A549 (cell line): ENCODE measurements at regions of chr3 and their contacts with region 1.

Region 1: DNA sequence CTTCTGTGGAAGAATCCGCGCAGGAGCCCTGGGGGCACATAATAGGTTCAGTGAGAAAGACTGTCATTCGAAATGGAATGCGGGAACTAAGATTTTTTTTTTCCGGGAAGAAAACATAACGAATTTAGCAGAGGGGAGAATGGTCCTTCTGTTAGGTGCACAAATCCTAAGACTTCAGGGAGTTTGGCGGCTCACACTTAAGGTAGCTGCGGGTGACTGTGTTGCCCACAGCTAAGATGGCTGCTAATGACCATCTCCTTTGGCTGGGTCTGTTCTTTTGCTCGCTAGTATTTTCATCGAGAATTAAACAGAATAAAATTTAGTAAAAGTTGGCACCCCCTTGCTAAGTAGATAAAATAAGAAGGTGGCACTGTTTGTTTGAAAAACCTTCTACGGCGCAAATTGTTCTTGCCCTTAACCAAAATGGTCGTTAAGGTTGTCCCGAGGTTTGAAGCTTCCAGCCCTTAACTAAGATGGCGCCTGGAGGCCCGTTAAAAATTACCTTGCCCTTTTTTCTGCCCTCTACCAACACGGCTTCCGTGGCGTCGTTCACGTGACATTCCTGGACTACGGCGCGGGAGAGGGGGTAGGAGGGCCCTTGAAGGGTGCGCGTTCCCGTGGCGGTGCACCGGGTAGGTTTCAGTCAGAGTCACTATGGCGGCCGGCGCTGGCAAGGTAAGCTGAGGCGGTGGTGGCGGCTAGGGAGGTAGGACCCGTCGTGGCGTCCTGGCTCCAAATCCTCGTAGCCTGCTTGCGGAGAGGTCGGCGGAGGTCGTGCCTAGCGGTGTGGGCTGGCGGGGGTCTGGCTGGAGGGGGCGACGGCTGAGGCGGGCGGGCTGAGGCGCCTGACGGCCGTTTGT is at the start of gene SLMAP:
- DNase-seq: peak; percentile 83 to 96
- ATAC-seq: peak; percentile 89 to 96
- H3K4me3 ChIP-seq: peak within 1 kb of the TSS; percentile 95
- H3K27ac ChIP-seq: peak within 1 kb of the TSS; percentile 82 to 92
- H3K4me1 ChIP-seq: peaks cover 36% of the 10 kb centered on the region
- CTCF ChIP-seq: no peak
- EP300 ChIP-seq: no peak
- POLR2A ChIP-seq: peak; percentile 80
- RAD21 ChIP-seq: no peak
- polyA plus RNA-seq, gene SLMAP: 25.3 and 33.1 TPM in 2 replicates

Region 2: GRCh38 chr3:57692259-57693147 is 63.4 kb before region 1 on chr3 and contains the start of gene DENND6A:
- CTCF ChIA-PET with region 1: no interaction called
- POLR2A ChIA-PET with region 1: interaction called, 15 read pairs
- DNase-seq: peak; percentile 84 to 89
- ATAC-seq: peak; percentile 98
- H3K4me3 ChIP-seq: peak within 1 kb of the TSS; percentile 62
- H3K27ac ChIP-seq: peak within 1 kb of the TSS; percentile 93 to 99
- H3K4me1 ChIP-seq: peaks cover 21% of the 10 kb centered on the region; the same call in 2 of the 3 replicates
- CTCF ChIP-seq: no peak
- EP300 ChIP-seq: no peak
- POLR2A ChIP-seq: peak; percentile 69
- RAD21 ChIP-seq: no peak
- polyA plus RNA-seq, gene DENND6A: 15.8 and 18.1 TPM in 2 replicates